ENCODE measurements at regions of chr19 and their contacts with region 1.

Region 1: GRCh38 chr19:13022859-13023636 is 27.8 kb downstream of the NFIX start:
- DNase-seq: peak; percentile 29
- ATAC-seq: peak; percentile 63
- H3K4me3 Mint-ChIP-seq: peak overlapping the region; percentile 64
- H3K27ac Mint-ChIP-seq: peak overlapping the region; percentile 12
- H3K4me1 Mint-ChIP-seq: peaks cover 18% of the 10 kb centered on the region
- H3K27me3 Mint-ChIP-seq: peaks cover 21% of the 10 kb centered on the region
- CTCF ChIP-seq: no peak

Region 2: GRCh38 chr19:13012690-13013608 is 10.1 kb before region 1 on chr19:
- CTCF ChIA-PET with region 1: interaction called, 19 read pairs
- POLR2A ChIA-PET with region 1: interaction called, 8 read pairs
- intact Hi-C with region 1: no loop called
- DNase-seq: peak; percentile 70
- ATAC-seq: peak; percentile 62
- H3K4me3 Mint-ChIP-seq: peak overlapping the region; percentile 77
- H3K27ac Mint-ChIP-seq: peak overlapping the region; percentile 75
- H3K4me1 Mint-ChIP-seq: peaks cover 19% of the 10 kb centered on the region
- H3K27me3 Mint-ChIP-seq: peaks cover 59% of the 10 kb centered on the region
- CTCF ChIP-seq: no peak